K562 (cell line): ENCODE measurements at regions of chr7 and their contacts with region 1.

Region 1: GRCh38 chr7:100483101-100483721 is 516 bp upstream of the NYAP1 start:
- DNase-seq: peak; percentile 85 to 93 (median 88)
- ATAC-seq: peak; percentile 76
- H3K4me3 ChIP-seq: peak overlapping the region; percentile 64
- H3K27ac ChIP-seq: peak overlapping the region; percentile 27; the same call in 1 of the 3 replicates
- H3K4me1 ChIP-seq: peaks cover 8 to 70% of the 10 kb centered on the region in 2 experiments; a peak in 4 of 5 replicates
- H3K27me3 ChIP-seq: no peaks in the 10 kb centered on the region
- CTCF ChIP-seq: peak; percentile 88 to 99 (median 98)
- EP300 ChIP-seq: no peak; the same call in 1 of the 2 replicates
- POLR2A ChIP-seq: no peak
- RAD21 ChIP-seq: peak; percentile 93 to 94

Region 2: DNA sequence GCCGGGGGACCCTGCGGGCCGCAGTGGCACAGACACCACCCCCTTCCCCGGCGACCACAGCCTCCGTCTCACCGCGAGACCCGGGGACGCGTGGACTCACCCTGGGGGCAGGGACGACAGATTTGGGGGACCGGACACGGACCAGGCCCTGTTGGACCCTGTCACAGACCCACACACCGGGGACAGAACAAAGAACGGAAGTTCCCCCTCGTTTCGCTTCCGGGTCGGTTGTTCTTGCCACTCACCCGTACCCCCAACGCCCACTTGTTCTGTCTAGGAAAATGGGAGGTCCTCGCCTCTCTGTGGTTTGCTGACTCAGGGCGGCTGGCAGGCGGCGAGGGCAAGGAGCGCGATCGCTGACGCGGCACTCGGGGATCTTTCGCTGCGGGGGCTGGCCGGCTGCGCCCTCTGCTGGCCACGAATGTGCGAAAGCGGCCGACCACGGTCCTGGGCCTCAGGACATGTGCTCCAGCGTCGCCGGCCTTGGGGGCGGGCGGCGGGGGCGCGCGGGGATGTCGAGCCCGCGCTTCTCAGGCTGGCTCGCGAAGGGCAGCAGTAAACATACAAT is 401.6 kb before region 1 on chr7 and contains the start of gene ZNF3:
- CTCF ChIA-PET with region 1: no interaction called
- POLR2A ChIA-PET with region 1: no interaction called
- in situ Hi-C with region 1: no loop called
- intact Hi-C with region 1: no loop called
- DNase-seq: peak; percentile 92 to 100 (median 95)
- ATAC-seq: peak; percentile 92
- H3K4me3 ChIP-seq: peak within 1 kb of the TSS; percentile 67
- H3K27ac ChIP-seq: peak within 1 kb of the TSS; percentile 90
- H3K4me1 ChIP-seq: peaks cover 10 to 26% of the 10 kb centered on the region in 2 experiments; a peak in 4 of 5 replicates
- H3K27me3 ChIP-seq: no peaks in the 10 kb centered on the region
- CTCF ChIP-seq: peak; percentile 94 to 96 (median 95)
- EP300 ChIP-seq: peak; percentile 79
- POLR2A ChIP-seq: peak; percentile 84
- RAD21 ChIP-seq: peak; percentile 86 to 91
- polyA plus RNA-seq, gene ZNF3: 30.0 to 51.5 TPM

Region 3: GRCh38 chr7:100400656-100401055 is 82.6 kb before region 1 on chr7:
- CTCF ChIA-PET with region 1: interaction called, 23 read pairs
- POLR2A ChIA-PET with region 1: interaction called, 3 read pairs
- in situ Hi-C with region 1: no loop called
- intact Hi-C with region 1: loop called (anchors 1 kb)
- DNase-seq: peak; percentile 61 to 85 (median 74)
- ATAC-seq: peak; percentile 99
- H3K4me3 ChIP-seq: no peak overlapping the region
- H3K27ac ChIP-seq: no peak overlapping the region
- H3K4me1 ChIP-seq: peaks cover 0 to 14% of the 10 kb centered on the region in 2 experiments; a peak in 2 of 5 replicates
- H3K27me3 ChIP-seq: peaks cover 2 to 9% of the 10 kb centered on the region in 2 experiments; a peak in 4 of 5 replicates
- CTCF ChIP-seq: peak; percentile 95 to 97 (median 97)
- EP300 ChIP-seq: no peak
- POLR2A ChIP-seq: no peak
- RAD21 ChIP-seq: peak; percentile 66 to 92

Region 4: GRCh38 chr7:100469227-100470044 is 13.8 kb before region 1 on chr7:
- CTCF ChIA-PET with region 1: interaction called, 22 read pairs
- POLR2A ChIA-PET with region 1: interaction called, 4 read pairs
- in situ Hi-C with region 1: no loop called
- intact Hi-C with region 1: loop called (anchors 1 kb)
- DNase-seq: peak; percentile 88 to 92 (median 90)
- ATAC-seq: peak; percentile 87
- H3K4me3 ChIP-seq: no peak overlapping the region
- H3K27ac ChIP-seq: no peak overlapping the region
- H3K4me1 ChIP-seq: peaks cover 17 to 52% of the 10 kb centered on the region in 2 experiments
- H3K27me3 ChIP-seq: no peaks in the 10 kb centered on the region
- CTCF ChIP-seq: peak; percentile 95 to 98 (median 98)
- EP300 ChIP-seq: no peak
- POLR2A ChIP-seq: 0 out of 2 replicates have a peak, but pooled peaks have one; percentile 18
- RAD21 ChIP-seq: peak; percentile 92 to 94